CD8-positive, alpha-beta T cell (primary cell): ENCODE measurements at regions of chr12 and their contacts with region 1.

Region 1: GRCh38 chr12:69879041-69879960 is 54.3 kb downstream of the MYRFL start:
- DNase-seq: peak; percentile 18 to 73 (median 63)
- ATAC-seq: peak; percentile 73
- H3K4me3 ChIP-seq: no peak overlapping the region
- H3K4me3 Mint-ChIP-seq: no peak overlapping the region
- H3K27ac ChIP-seq: no peak overlapping the region
- H3K27ac Mint-ChIP-seq: no peak overlapping the region
- H3K4me1 ChIP-seq: no peaks in the 10 kb centered on the region
- H3K4me1 Mint-ChIP-seq: peaks cover 4% of the 10 kb centered on the region
- H3K27me3 ChIP-seq: no peaks in the 10 kb centered on the region
- H3K27me3 Mint-ChIP-seq: peaks cover 25% of the 10 kb centered on the region
- CTCF ChIP-seq: peak; percentile 91

Region 2: DNA sequence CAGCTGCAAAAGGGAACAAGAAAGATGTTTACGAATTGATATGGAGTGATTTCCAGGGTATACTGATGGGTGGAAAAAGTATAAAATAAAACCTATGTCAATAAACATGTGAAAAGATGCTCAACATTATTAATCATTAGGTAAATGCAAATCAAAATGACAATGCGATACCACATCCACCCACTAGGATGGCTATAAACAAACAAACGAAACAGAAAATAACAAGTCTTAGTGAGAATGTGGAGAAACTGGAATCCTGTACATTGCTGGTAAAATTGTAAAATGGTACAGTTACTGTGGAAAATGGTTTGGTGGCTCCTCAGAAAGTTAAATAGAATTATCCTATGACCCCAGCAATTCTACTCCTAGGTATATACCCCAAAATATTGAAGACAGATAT is 170.7 kb before region 1 on chr12:
- CTCF ChIA-PET with region 1: no interaction called
- POLR2A ChIA-PET with region 1: no interaction called
- intact Hi-C with region 1: no loop called
- DNase-seq: no peak
- ATAC-seq: no peak
- H3K4me3 ChIP-seq: no peak overlapping the region
- H3K4me3 Mint-ChIP-seq: no peak overlapping the region
- H3K27ac ChIP-seq: no peak overlapping the region
- H3K27ac Mint-ChIP-seq: no peak overlapping the region
- H3K4me1 ChIP-seq: no peaks in the 10 kb centered on the region
- H3K4me1 Mint-ChIP-seq: no peaks in the 10 kb centered on the region
- H3K27me3 ChIP-seq: peaks cover 0 to 3% of the 10 kb centered on the region in 2 experiments
- H3K27me3 Mint-ChIP-seq: peaks cover 24% of the 10 kb centered on the region
- CTCF ChIP-seq: peak; percentile 14

Region 3: GRCh38 chr12:69868695-69869094 is 10.6 kb before region 1 on chr12:
- CTCF ChIA-PET with region 1: interaction called, 12 read pairs
- POLR2A ChIA-PET with region 1: no interaction called
- intact Hi-C with region 1: no loop called
- DNase-seq: no peak
- ATAC-seq: no peak
- H3K4me3 ChIP-seq: no peak overlapping the region
- H3K4me3 Mint-ChIP-seq: no peak overlapping the region
- H3K27ac ChIP-seq: no peak overlapping the region
- H3K27ac Mint-ChIP-seq: no peak overlapping the region
- H3K4me1 ChIP-seq: no peaks in the 10 kb centered on the region
- H3K4me1 Mint-ChIP-seq: no peaks in the 10 kb centered on the region
- H3K27me3 ChIP-seq: no peaks in the 10 kb centered on the region
- H3K27me3 Mint-ChIP-seq: peaks cover 29% of the 10 kb centered on the region
- CTCF ChIP-seq: no peak

Region 4: DNA sequence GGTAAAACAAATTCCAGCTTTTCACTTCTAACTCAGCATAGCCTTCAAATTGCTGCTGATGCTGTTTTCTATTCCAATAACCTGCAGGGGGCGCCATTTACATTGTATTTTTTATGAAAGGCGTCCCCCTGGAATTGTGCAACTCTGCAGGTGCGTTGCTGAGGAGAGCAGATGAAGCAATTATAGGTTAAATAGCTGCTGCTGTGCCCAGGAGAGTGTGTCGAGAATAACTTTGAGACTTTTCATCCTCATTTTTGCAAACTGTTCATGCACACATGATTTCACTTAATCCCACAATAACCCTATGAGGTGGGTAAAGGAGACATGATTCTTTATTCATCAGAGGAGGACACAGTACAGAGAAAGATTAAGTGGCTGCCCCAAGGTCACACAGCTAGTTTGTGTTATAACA is 21.4 kb after region 1 on chr12:
- CTCF ChIA-PET with region 1: interaction called, 22 read pairs
- POLR2A ChIA-PET with region 1: no interaction called
- intact Hi-C with region 1: no loop called
- DNase-seq: peak; percentile 18 to 77 (median 62)
- ATAC-seq: no peak
- H3K4me3 ChIP-seq: no peak overlapping the region
- H3K4me3 Mint-ChIP-seq: no peak overlapping the region
- H3K27ac ChIP-seq: no peak overlapping the region
- H3K27ac Mint-ChIP-seq: no peak overlapping the region
- H3K4me1 ChIP-seq: no peaks in the 10 kb centered on the region
- H3K4me1 Mint-ChIP-seq: no peaks in the 10 kb centered on the region
- H3K27me3 ChIP-seq: no peaks in the 10 kb centered on the region
- H3K27me3 Mint-ChIP-seq: peaks cover 3% of the 10 kb centered on the region
- CTCF ChIP-seq: peak; percentile 91

Region 5: DNA sequence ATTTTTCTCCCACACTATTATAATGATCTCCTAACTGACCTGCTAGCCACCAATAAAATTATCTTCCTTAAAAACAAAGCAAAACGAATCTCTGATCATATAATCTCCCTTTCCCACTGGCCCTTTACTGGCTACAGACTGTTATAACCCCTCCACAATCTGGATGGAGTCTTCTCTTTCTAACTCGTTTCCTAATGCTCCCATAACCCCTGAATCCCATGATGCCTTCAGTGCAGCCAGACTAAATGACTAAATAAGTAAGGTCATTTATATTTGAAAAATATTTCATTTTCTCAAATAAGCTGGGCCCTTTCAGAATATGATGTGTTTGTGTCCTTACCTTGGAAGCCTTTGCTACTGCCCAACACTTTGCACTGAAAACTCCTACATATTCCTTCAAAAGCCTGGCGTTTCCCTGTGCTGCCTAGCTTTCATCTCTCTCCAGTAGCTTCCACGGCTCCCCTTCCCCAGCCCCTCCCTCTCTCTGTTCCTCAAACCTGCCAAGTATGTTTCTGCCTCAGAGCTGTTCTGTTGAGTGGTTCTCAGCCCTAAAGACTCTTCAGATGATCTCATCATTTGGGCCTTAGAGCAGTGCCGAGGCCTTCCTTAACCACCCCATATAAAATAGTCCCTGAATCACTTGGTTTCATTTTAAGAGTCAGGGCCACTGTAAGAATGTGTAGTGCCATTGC is 37.4 kb after region 1 on chr12:
- CTCF ChIA-PET with region 1: no interaction called
- POLR2A ChIA-PET with region 1: no interaction called
- intact Hi-C with region 1: no loop called
- DNase-seq: no peak
- ATAC-seq: no peak
- H3K4me3 ChIP-seq: no peak overlapping the region
- H3K4me3 Mint-ChIP-seq: no peak overlapping the region
- H3K27ac ChIP-seq: no peak overlapping the region
- H3K27ac Mint-ChIP-seq: no peak overlapping the region
- H3K4me1 ChIP-seq: no peaks in the 10 kb centered on the region
- H3K4me1 Mint-ChIP-seq: no peaks in the 10 kb centered on the region
- H3K27me3 ChIP-seq: no peaks in the 10 kb centered on the region
- H3K27me3 Mint-ChIP-seq: peaks cover 4% of the 10 kb centered on the region
- CTCF ChIP-seq: no peak

Region 6: GRCh38 chr12:70106347-70106746 is 227.0 kb after region 1 on chr12:
- CTCF ChIA-PET with region 1: no interaction called
- POLR2A ChIA-PET with region 1: no interaction called
- intact Hi-C with region 1: no loop called
- DNase-seq: no peak
- ATAC-seq: no peak
- H3K4me3 ChIP-seq: no peak overlapping the region
- H3K4me3 Mint-ChIP-seq: no peak overlapping the region
- H3K27ac ChIP-seq: no peak overlapping the region
- H3K27ac Mint-ChIP-seq: no peak overlapping the region
- H3K4me1 ChIP-seq: no peaks in the 10 kb centered on the region
- H3K4me1 Mint-ChIP-seq: no peaks in the 10 kb centered on the region
- H3K27me3 ChIP-seq: no peaks in the 10 kb centered on the region
- H3K27me3 Mint-ChIP-seq: peaks cover 4% of the 10 kb centered on the region
- CTCF ChIP-seq: no peak

Region 7: DNA sequence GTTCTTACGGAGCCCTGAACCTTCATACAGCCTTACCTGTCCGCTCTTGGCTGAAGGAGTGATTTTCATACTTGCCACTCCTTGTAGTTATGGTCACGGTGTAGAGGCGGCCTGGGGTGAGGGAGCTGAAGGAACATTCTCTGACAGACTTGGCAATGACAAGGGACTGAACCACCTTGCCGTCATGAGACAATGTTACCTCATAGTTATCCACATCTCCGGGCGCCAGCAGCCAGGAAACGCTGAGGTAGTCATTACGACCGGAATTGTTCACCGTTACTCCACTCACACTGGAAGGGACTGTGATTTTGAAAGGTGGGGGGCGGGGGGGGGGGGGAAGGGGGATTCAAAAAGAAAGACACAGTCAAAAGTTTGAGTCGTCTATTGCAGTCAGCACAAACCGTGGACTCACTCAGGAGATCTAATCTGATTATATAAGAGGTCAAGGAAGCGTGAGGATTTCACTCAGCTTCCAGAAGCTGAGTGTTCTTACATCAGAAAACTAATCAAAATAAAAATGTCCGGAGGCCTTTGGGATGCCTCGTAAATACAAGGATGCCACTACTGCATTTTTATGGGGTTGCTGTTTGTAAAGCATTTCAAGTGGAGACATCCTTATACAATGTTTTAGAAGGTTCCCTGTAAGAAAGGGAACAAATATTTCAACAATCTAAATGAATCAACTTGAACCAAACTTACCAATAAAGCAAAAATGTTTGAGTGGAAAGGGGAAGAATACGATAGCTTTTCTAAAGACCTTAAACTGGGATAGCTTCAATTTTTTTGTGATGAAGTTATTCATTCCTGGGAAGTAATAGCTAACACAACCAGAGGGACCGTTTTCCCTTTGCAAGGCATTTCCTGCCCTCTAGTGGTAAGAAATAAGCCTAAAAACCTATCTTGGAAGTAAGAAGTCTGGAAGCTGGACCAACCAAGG is 697.3 kb after region 1 on chr12:
- CTCF ChIA-PET with region 1: interaction called, 62 read pairs
- POLR2A ChIA-PET with region 1: no interaction called
- intact Hi-C with region 1: loop called (anchors 1 kb)
- DNase-seq: peak in 2 of 9 experiments; percentile 48 to 61
- ATAC-seq: no peak
- H3K4me3 ChIP-seq: no peak overlapping the region
- H3K4me3 Mint-ChIP-seq: no peak overlapping the region
- H3K27ac ChIP-seq: no peak overlapping the region
- H3K27ac Mint-ChIP-seq: no peak overlapping the region
- H3K4me1 ChIP-seq: no peaks in the 10 kb centered on the region
- H3K4me1 Mint-ChIP-seq: no peaks in the 10 kb centered on the region
- H3K27me3 ChIP-seq: no peaks in the 10 kb centered on the region
- H3K27me3 Mint-ChIP-seq: peaks cover 6% of the 10 kb centered on the region
- CTCF ChIP-seq: peak; percentile 70

Region 8: GRCh38 chr12:70733385-70733784 is 854.1 kb after region 1 on chr12:
- CTCF ChIA-PET with region 1: interaction called, 39 read pairs
- POLR2A ChIA-PET with region 1: no interaction called
- intact Hi-C with region 1: loop called (anchors 1 kb)
- DNase-seq: peak in 2 of 9 experiments; percentile 19 to 52
- ATAC-seq: no peak
- H3K4me3 ChIP-seq: no peak overlapping the region
- H3K4me3 Mint-ChIP-seq: no peak overlapping the region
- H3K27ac ChIP-seq: no peak overlapping the region
- H3K27ac Mint-ChIP-seq: no peak overlapping the region
- H3K4me1 ChIP-seq: no peaks in the 10 kb centered on the region
- H3K4me1 Mint-ChIP-seq: no peaks in the 10 kb centered on the region
- H3K27me3 ChIP-seq: peaks cover 0 to 3% of the 10 kb centered on the region in 2 experiments
- H3K27me3 Mint-ChIP-seq: peaks cover 2% of the 10 kb centered on the region
- CTCF ChIP-seq: peak; percentile 31